ENCODE measurements at regions of chr5 and their contacts with region 1.

Region 1: DNA sequence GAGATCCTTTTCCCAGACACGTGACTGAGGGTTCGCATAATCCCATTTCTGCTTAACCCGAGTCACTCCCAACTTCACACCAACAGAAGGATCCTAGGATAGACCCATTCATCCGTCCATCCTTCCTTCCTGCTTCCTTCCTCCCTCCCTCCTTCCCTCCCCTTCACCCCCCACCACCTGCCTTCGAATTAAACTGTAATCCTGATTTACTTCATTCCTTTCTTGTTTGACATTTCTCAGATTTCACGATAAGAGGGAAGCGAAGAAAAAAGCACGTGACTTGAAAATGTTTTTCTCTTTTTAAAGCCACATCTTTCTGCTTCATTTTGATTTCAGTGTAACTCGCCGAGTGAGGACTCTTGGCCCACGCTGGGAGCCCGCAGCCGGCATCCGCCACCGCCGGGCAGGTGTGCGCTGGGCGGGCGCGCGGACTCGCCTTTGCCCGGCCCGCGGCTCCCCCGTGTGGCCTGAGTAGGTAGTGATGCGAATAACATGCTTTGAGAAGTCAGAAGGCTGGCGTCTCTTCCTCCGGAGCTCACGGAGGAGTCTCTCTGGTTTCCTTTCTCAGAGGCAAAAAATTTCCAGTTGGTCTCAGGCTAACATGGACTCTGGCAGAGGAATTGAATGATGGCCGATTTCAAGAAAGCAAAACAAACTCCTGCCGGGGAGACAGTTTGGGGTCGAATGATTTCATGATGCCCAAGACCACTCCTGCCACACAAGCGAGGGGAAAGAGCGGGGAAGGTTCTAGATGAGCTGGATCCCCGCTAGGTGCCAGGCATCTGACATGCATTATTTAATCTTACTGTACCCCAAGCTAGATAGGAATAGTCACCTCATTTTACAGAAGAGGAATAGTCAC is 117.7 kb downstream of the SLC12A2 start:
- DNase-seq: peak; percentile 85
- CTCF ChIP-seq: peak; percentile 89

Region 2: GRCh38 chr5:127766676-127767340 is 434.5 kb before region 1 on chr5:
- in situ Hi-C with region 1: loop called (anchors 10 kb)
- DNase-seq: no peak
- CTCF ChIP-seq: no peak

Region 3: GRCh38 chr5:127885176-127885575 is 316.1 kb before region 1 on chr5:
- in situ Hi-C with region 1: loop called (anchors 10 kb)
- DNase-seq: no peak
- CTCF ChIP-seq: no peak

Region 4: GRCh38 chr5:128674825-128675446 is 473.6 kb after region 1 on chr5:
- in situ Hi-C with region 1: loop called (anchors 25 kb)
- DNase-seq: peak; percentile 31
- CTCF ChIP-seq: peak; percentile 40

Measured in GM13976 (cell line).